PC-9 (cell line): ENCODE measurements at regions of chr7 and their contacts with region 1.

Region 1: GRCh38 chr7:85595639-85596268 is 408.9 kb upstream of the SEMA3D start:
- DNase-seq: no peak
- H3K4me3 ChIP-seq: no peak overlapping the region
- H3K27ac ChIP-seq: no peak overlapping the region
- H3K4me1 ChIP-seq: no peaks in the 10 kb centered on the region
- H3K27me3 ChIP-seq: no peaks in the 10 kb centered on the region
- CTCF ChIP-seq: no peak

Region 2: GRCh38 chr7:85664341-85664740 is 68.6 kb after region 1 on chr7:
- CTCF ChIA-PET with region 1: no interaction called
- POLR2A ChIA-PET with region 1: interaction called, 32 read pairs
- intact Hi-C with region 1: no loop called
- DNase-seq: no peak
- H3K4me3 ChIP-seq: no peak overlapping the region
- H3K27ac ChIP-seq: no peak overlapping the region
- H3K4me1 ChIP-seq: no peaks in the 10 kb centered on the region
- H3K27me3 ChIP-seq: no peaks in the 10 kb centered on the region
- CTCF ChIP-seq: no peak

Region 3: GRCh38 chr7:85719981-85720963 is 124.5 kb after region 1 on chr7:
- CTCF ChIA-PET with region 1: no interaction called
- POLR2A ChIA-PET with region 1: interaction called, 22 read pairs
- intact Hi-C with region 1: no loop called
- DNase-seq: peak in 1 of 2 experiments; percentile 36
- H3K4me3 ChIP-seq: no peak overlapping the region
- H3K27ac ChIP-seq: peak overlapping the region; percentile 15
- H3K4me1 ChIP-seq: peaks cover 11% of the 10 kb centered on the region; the same call in 1 of the 2 replicates
- H3K27me3 ChIP-seq: no peaks in the 10 kb centered on the region
- CTCF ChIP-seq: no peak